Activated CD4-positive, alpha-beta memory T cell treated with anti-CD3 and anti-CD28 coated beads for 36 hours (primary cell): ENCODE measurements at regions of chr3 and their contacts with region 1.

Region 1: DNA sequence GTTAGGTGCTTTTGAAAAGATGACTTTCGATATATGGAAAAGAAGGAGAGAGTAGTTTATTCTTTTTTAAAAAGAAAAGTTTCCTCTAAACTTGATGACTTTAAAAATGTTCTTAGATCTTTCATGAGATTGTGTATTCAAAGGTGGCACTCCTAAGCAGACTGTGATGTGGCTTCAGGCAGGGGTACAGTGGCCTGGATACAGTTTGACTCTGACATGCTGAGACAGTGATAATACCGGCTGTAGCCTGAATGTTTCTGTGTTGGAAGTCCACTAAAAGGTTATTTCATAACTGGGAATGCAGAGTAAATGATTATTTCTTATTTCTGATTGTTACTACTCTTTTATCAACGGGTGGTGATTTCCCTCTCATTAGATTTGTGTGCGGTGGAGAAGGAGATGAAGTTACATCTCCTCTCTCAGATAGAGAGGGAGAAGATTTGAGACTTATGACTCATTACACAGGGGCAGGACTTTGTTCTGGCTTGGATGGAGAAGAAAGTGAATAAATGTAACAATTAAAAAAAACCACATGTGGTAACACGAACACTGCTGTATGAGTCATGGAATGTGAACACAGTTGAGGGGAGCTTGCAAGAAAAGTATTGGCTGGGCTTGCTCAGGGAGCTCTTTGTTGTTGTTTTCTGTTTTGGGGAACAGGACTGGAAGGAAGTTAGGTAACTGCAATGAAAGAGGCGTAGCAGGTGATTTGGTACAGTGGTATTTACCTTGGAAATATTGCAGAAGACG is 21.6 kb downstream of the SPTSSB start:
- DNase-seq: peak; percentile 31
- H3K4me3 Mint-ChIP-seq: no peak overlapping the region
- H3K27ac Mint-ChIP-seq: peak overlapping the region; percentile 18
- H3K4me1 Mint-ChIP-seq: peaks cover 27% of the 10 kb centered on the region
- H3K27me3 Mint-ChIP-seq: peaks cover 9% of the 10 kb centered on the region

Region 2: GRCh38 chr3:161371430-161372326 is 22.0 kb after region 1 on chr3 and contains the start of gene SPTSSB:
- CTCF ChIA-PET with region 1: interaction called, 4 read pairs
- POLR2A ChIA-PET with region 1: no interaction called
- intact Hi-C with region 1: loop called (anchors 2 kb)
- DNase-seq: peak; percentile 57
- H3K4me3 Mint-ChIP-seq: peak within 1 kb of the TSS; percentile 74
- H3K27ac Mint-ChIP-seq: no peak within 1 kb of the TSS
- H3K4me1 Mint-ChIP-seq: peaks cover 8% of the 10 kb centered on the region
- H3K27me3 Mint-ChIP-seq: peaks cover 23% of the 10 kb centered on the region
- total RNA-seq, gene SPTSSB: not detected

Region 3: GRCh38 chr3:161393803-161394202 is 44.1 kb after region 1 on chr3:
- CTCF ChIA-PET with region 1: no interaction called
- POLR2A ChIA-PET with region 1: no interaction called
- intact Hi-C with region 1: loop called (anchors 1 kb)
- DNase-seq: no peak
- H3K4me3 Mint-ChIP-seq: no peak overlapping the region
- H3K27ac Mint-ChIP-seq: no peak overlapping the region
- H3K4me1 Mint-ChIP-seq: peaks cover 42% of the 10 kb centered on the region
- H3K27me3 Mint-ChIP-seq: peaks cover 3% of the 10 kb centered on the region